CD4-positive, alpha-beta T cell (primary cell): ENCODE measurements at regions of chr7 and their contacts with region 1.

Region 1: DNA sequence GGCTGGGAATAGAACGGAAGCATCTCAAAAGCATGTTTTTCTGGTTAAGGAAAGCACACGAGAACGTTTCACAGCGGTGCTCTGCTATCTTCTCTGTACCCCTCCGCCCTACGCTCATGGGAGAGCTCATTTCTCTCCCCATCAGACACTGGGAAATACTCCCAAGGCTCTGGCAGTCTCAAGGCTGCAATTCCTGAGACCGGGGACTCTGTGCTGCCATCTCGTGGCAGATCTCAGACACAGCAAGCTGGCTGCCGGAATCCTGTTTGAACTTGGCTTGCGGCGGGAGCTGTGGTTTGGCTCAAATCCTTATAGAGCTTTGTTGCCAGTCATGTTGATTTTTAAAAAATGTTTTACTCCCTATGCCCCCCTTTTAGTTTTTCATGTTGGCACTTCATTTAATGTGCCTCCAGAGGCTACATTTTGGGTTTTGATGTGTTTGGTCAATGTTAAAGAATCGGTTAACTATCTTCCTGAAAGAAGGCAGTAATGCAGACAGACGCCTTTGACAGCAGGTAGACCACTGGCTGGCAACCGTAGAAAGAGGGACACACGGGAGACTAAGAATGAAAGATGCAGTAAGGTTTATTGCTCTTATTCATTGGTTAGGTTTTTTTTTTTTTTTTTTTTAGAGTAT is 27.6 kb downstream of the BMPER start:
- DNase-seq: peak; percentile 30 to 72 (median 48)
- ATAC-seq: peak; percentile 43
- H3K4me3 ChIP-seq: no peak overlapping the region
- H3K4me3 Mint-ChIP-seq: no peak overlapping the region
- H3K27ac ChIP-seq: no peak overlapping the region
- H3K27ac Mint-ChIP-seq: no peak overlapping the region
- H3K4me1 ChIP-seq: peaks cover 3% of the 10 kb centered on the region
- H3K4me1 Mint-ChIP-seq: peaks cover 5% of the 10 kb centered on the region
- H3K27me3 ChIP-seq: peaks cover 0 to 17% of the 10 kb centered on the region in 2 experiments
- H3K27me3 Mint-ChIP-seq: peaks cover 25% of the 10 kb centered on the region
- CTCF ChIP-seq: peak; percentile 83

Region 2: GRCh38 chr7:32694182-32694581 is 1238.8 kb before region 1 on chr7:
- CTCF ChIA-PET with region 1: no interaction called
- POLR2A ChIA-PET with region 1: no interaction called
- intact Hi-C with region 1: loop called in 1 of 2 experiments (anchors 5 kb)
- DNase-seq: no peak
- ATAC-seq: no peak
- H3K4me3 ChIP-seq: no peak overlapping the region
- H3K4me3 Mint-ChIP-seq: no peak overlapping the region
- H3K27ac ChIP-seq: no peak overlapping the region
- H3K27ac Mint-ChIP-seq: no peak overlapping the region
- H3K4me1 ChIP-seq: peaks cover 3% of the 10 kb centered on the region
- H3K4me1 Mint-ChIP-seq: peaks cover 10% of the 10 kb centered on the region
- H3K27me3 ChIP-seq: no peaks in the 10 kb centered on the region
- H3K27me3 Mint-ChIP-seq: peaks cover 11% of the 10 kb centered on the region
- CTCF ChIP-seq: no peak

Region 3: GRCh38 chr7:32761451-32762205 is 1171.3 kb before region 1 on chr7:
- CTCF ChIA-PET with region 1: no interaction called
- POLR2A ChIA-PET with region 1: no interaction called
- intact Hi-C with region 1: loop called (anchors 2 to 5 kb)
- DNase-seq: peak in 1 of 14 experiments; percentile 8
- ATAC-seq: no peak
- H3K4me3 ChIP-seq: no peak overlapping the region
- H3K4me3 Mint-ChIP-seq: no peak overlapping the region
- H3K27ac ChIP-seq: no peak overlapping the region
- H3K27ac Mint-ChIP-seq: no peak overlapping the region
- H3K4me1 ChIP-seq: peaks cover 3% of the 10 kb centered on the region
- H3K4me1 Mint-ChIP-seq: peaks cover 11% of the 10 kb centered on the region
- H3K27me3 ChIP-seq: peaks cover 25 to 42% of the 10 kb centered on the region in 2 experiments
- H3K27me3 Mint-ChIP-seq: peaks cover 73% of the 10 kb centered on the region
- CTCF ChIP-seq: no peak

Region 4: GRCh38 chr7:33185786-33186185 is 747.2 kb before region 1 on chr7:
- CTCF ChIA-PET with region 1: interaction called, 7 read pairs
- POLR2A ChIA-PET with region 1: no interaction called
- intact Hi-C with region 1: loop called in 1 of 2 experiments (anchors 2 kb)
- DNase-seq: peak in 4 of 14 experiments; percentile 6 to 60 (median 55)
- ATAC-seq: no peak
- H3K4me3 ChIP-seq: no peak overlapping the region
- H3K4me3 Mint-ChIP-seq: no peak overlapping the region
- H3K27ac ChIP-seq: no peak overlapping the region
- H3K27ac Mint-ChIP-seq: no peak overlapping the region
- H3K4me1 ChIP-seq: peaks cover 4% of the 10 kb centered on the region
- H3K4me1 Mint-ChIP-seq: peaks cover 9% of the 10 kb centered on the region
- H3K27me3 ChIP-seq: no peaks in the 10 kb centered on the region
- H3K27me3 Mint-ChIP-seq: no peaks in the 10 kb centered on the region
- CTCF ChIP-seq: peak; percentile 53

Region 5: GRCh38 chr7:33248671-33249070 is 684.3 kb before region 1 on chr7:
- CTCF ChIA-PET with region 1: no interaction called
- POLR2A ChIA-PET with region 1: no interaction called
- intact Hi-C with region 1: loop called in 1 of 2 experiments (anchors 5 kb)
- DNase-seq: no peak
- ATAC-seq: no peak
- H3K4me3 ChIP-seq: no peak overlapping the region
- H3K4me3 Mint-ChIP-seq: no peak overlapping the region
- H3K27ac ChIP-seq: no peak overlapping the region
- H3K27ac Mint-ChIP-seq: no peak overlapping the region
- H3K4me1 ChIP-seq: no peaks in the 10 kb centered on the region
- H3K4me1 Mint-ChIP-seq: no peaks in the 10 kb centered on the region
- H3K27me3 ChIP-seq: no peaks in the 10 kb centered on the region
- H3K27me3 Mint-ChIP-seq: no peaks in the 10 kb centered on the region
- CTCF ChIP-seq: no peak